Activated CD4-positive, alpha-beta memory T cell treated with anti-CD3 and anti-CD28 coated beads for 36 hours (primary cell): ENCODE measurements at regions of chr11 and their contacts with region 1.

Region 1: GRCh38 chr11:61111786-61112517 is 9.7 kb downstream of the CD5 start:
- DNase-seq: peak; percentile 89
- H3K4me3 Mint-ChIP-seq: no peak overlapping the region
- H3K27ac Mint-ChIP-seq: no peak overlapping the region
- H3K4me1 Mint-ChIP-seq: peaks cover 97% of the 10 kb centered on the region
- H3K27me3 Mint-ChIP-seq: no peaks in the 10 kb centered on the region

Region 2: GRCh38 chr11:60970369-60970774 is 141.6 kb before region 1 on chr11:
- CTCF ChIA-PET with region 1: interaction called, 12 read pairs
- POLR2A ChIA-PET with region 1: interaction called, 5 read pairs
- intact Hi-C with region 1: no loop called
- DNase-seq: peak; percentile 89
- H3K4me3 Mint-ChIP-seq: peak overlapping the region; percentile 95
- H3K27ac Mint-ChIP-seq: peak overlapping the region; percentile 99
- H3K4me1 Mint-ChIP-seq: peaks cover 15% of the 10 kb centered on the region
- H3K27me3 Mint-ChIP-seq: no peaks in the 10 kb centered on the region

Region 3: GRCh38 chr11:60985991-60986915 is 125.7 kb before region 1 on chr11:
- CTCF ChIA-PET with region 1: no interaction called
- POLR2A ChIA-PET with region 1: interaction called, 20 read pairs
- intact Hi-C with region 1: loop called (anchors 1 kb)
- DNase-seq: peak; percentile 97
- H3K4me3 Mint-ChIP-seq: peak overlapping the region; percentile 84
- H3K27ac Mint-ChIP-seq: peak overlapping the region; percentile 99
- H3K4me1 Mint-ChIP-seq: peaks cover 91% of the 10 kb centered on the region
- H3K27me3 Mint-ChIP-seq: no peaks in the 10 kb centered on the region

Region 4: DNA sequence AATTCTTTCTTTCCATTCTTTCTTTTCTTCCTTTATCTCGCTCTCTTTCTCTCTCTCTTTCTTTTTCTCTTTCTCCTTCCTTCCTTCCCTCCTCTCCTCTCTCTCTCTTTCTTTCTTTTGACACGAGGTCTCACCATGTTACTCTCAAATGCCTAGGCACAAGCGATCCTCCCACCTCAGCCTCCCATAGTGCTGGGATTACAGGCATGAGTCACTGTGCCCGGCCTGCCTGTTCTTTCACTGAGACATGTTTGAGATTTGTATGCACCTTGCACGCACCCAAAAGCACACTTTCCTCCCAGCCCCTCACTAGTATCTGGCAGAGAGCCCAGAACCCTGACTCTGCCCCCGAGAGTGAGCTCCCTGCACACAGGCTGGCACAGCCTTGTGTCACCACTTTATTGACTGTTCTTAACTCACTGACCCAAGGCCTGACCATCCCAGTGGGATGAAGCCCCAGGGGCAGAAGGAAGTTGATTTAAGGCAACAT is 83.6 kb before region 1 on chr11:
- CTCF ChIA-PET with region 1: interaction called, 3 read pairs
- POLR2A ChIA-PET with region 1: interaction called, 13 read pairs
- intact Hi-C with region 1: no loop called
- DNase-seq: peak; percentile 88
- H3K4me3 Mint-ChIP-seq: peak overlapping the region; percentile 83
- H3K27ac Mint-ChIP-seq: peak overlapping the region; percentile 96
- H3K4me1 Mint-ChIP-seq: peaks cover 77% of the 10 kb centered on the region
- H3K27me3 Mint-ChIP-seq: no peaks in the 10 kb centered on the region

Region 5: DNA sequence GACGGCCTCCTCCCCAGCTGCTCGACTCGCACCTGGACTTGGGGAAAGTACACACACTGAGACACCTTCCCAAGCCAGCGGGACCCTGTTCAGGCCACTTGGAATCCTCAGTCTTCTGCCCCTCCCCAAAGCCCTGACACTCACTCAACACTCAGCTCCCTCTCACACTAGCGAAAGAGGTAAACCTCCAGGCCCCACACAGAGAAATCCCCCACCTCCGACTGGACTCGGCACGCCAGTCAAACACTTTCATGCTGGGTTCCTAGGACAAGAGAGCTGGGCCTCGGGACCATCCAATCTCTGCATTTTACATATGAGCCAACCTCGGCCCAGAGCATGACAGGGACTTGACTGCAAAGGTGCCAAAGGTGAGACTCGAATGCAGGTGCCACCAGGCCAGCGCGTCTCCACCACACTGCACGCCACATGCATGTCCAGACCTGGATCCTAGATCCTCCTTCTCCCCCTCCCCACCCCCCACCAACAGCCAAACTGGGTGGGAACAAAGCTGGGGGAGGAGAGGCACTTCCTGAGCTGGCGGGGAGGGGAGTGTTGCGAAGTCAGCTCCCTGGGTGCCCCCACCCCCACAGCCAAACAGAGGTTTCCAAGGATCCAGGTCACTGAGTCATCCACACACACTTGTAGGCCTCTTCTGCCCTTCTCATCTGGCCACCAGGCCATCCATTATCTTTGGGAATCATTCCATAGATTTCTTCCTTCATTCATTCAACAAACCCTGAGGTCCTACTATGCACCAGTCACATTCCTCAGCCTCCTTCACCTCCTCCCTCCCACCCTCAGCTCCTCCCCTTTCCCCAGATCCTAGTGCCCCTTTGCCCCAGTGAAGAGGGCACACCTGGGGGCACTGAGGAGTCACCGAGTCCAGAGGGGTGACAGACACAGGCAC is 20.3 kb before region 1 on chr11:
- CTCF ChIA-PET with region 1: interaction called, 6 read pairs
- POLR2A ChIA-PET with region 1: interaction called, 114 read pairs
- intact Hi-C with region 1: loop called (anchors 1 kb)
- DNase-seq: peak; percentile 85
- H3K4me3 Mint-ChIP-seq: peak overlapping the region; percentile 96
- H3K27ac Mint-ChIP-seq: peak overlapping the region; percentile 99
- H3K4me1 Mint-ChIP-seq: peaks cover 72% of the 10 kb centered on the region
- H3K27me3 Mint-ChIP-seq: no peaks in the 10 kb centered on the region